Left colon (tissue), 2 donors: ENCODE measurements at regions of chr3 and their contacts with region 1.

Region 1: DNA sequence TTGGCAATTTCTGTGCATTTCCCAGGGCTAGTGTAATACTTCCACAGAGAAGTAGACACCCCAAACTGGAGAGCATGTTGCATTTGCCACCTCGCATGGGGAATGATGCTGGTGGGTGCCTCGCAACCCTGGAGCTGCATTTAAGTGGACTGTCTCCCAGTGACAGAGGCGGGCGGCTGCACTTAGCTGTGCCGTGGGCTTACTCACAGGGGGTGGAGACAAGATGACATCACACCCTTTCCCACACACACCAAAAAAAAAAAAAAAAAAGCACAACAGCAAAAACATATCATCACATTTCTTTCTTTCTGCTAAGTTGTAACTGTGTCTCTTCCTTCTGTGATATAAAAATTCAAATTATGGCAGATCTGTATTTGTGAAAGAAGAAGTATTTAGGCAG is at the start of gene ABI3BP:
- DNase-seq: peak; percentile 54 to 70
- ATAC-seq: peak; percentile 82
- total RNA-seq, gene ABI3BP: 12.9 to 32.1 TPM

Region 2: GRCh38 chr3:100577382-100578002 is 415.8 kb before region 1 on chr3:
- intact Hi-C with region 1: no loop called
- DNase-seq: no peak
- ATAC-seq: no peak

Region 3: DNA sequence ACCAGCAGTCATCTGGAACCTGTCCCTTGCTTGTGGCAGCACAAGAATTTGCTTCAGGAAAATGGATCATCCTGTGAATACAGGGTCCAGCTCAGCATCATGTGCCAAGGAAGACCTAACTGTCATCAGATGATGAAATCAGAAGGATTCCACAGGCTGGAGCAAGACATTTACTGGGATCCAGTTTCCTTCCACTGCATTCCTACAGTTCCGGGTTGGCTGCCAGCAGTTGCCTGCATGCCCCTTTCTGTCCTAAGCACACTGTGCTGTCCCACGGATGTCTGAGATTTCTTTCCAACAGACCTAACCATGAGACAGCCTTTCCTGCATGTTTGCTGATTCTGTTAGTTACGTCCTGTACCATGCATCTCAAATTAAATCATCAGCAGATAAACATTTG is 186.3 kb after region 1 on chr3:
- intact Hi-C with region 1: loop called in 1 of 2 experiments (anchors 10 kb)
- DNase-seq: no peak
- ATAC-seq: no peak

Region 4: DNA sequence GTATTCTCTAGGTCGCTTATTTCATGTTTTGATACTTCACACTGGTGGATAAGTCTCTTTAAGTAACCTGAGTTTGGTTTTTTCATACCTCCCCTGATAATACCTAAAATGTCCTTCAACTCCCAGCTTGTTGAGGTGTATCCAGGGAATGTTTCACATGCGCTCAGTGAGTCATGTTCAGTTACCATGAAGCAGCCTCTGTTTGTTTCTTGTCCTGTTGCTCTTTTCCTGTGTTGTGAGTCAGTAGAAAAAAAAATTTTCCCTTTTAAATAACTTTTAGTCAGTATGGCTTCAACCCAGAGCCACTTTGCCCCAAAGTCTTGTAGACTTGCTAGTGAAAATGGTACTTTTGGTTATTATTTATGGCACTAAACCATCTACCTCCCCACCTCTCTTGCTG is 1163.1 kb after region 1 on chr3:
- intact Hi-C with region 1: no loop called
- DNase-seq: no peak
- ATAC-seq: no peak